ENCODE measurements at regions of chr5 and their contacts with region 1.

Region 1: DNA sequence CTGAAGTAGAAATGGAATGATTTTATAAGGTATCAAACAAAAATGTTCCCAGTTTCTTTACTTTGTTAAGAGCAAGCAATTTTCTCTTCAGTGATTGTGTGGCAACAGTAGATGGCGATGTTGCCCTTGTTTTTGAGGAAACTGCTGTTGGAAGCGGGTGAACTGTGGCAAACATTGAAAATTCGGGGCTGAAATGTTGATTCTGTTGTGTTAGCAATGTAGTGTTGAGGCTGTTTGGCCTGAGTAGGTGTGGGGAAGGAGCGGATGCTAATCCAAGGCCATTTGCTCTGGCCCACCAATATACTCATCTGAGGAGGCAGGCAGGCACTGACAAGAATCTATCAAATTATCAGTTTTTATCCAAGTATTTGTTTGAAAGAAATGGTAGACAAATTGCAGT is 129.8 kb downstream of the SLC12A2 start:
- DNase-seq: peak in 4 of 9 experiments; percentile 13 to 55 (median 34)
- ATAC-seq: no peak
- H3K4me3 ChIP-seq: no peak overlapping the region
- H3K4me3 Mint-ChIP-seq: no peak overlapping the region
- H3K27ac ChIP-seq: no peak overlapping the region
- H3K27ac Mint-ChIP-seq: no peak overlapping the region
- H3K4me1 ChIP-seq: no peaks in the 10 kb centered on the region
- H3K4me1 Mint-ChIP-seq: no peaks in the 10 kb centered on the region
- H3K27me3 ChIP-seq: no peaks in the 10 kb centered on the region
- H3K27me3 Mint-ChIP-seq: peaks cover 3% of the 10 kb centered on the region
- CTCF ChIP-seq: peak; percentile 58

Region 2: DNA sequence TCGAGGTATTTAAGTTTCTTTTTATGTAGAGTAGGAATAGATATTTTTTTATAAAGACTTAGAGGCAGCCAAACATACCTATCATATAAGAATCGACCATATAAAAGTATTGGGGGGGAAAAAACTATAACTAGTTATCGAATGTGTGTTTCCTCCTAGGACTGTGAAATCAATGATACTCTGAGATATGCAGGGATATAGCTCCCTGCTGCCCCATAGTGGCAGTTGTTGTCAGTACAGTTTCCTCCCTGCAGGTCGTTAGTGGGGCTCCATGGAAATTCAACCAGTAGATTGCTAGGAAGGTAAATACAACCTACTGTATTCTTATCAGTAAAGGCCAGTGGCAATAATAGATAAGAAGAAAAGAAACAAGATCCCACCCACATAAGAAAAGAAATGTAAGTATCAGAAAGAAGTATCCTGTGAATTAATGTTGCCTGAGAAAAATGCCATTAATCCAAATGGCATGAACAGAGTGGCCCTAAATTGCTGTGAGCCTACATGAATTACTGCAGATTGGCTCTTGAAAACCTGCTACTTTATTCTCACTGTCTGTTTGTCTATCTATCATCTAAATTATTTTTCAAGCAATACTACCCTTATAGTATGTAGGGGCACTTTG is 461.6 kb after region 1 on chr5:
- CTCF ChIA-PET with region 1: interaction called, 4 read pairs
- POLR2A ChIA-PET with region 1: no interaction called
- intact Hi-C with region 1: loop called in 1 of 2 experiments (anchors 5 kb)
- DNase-seq: peak in 3 of 9 experiments; percentile 7 to 28 (median 18)
- ATAC-seq: no peak
- H3K4me3 ChIP-seq: no peak overlapping the region
- H3K4me3 Mint-ChIP-seq: no peak overlapping the region
- H3K27ac ChIP-seq: no peak overlapping the region
- H3K27ac Mint-ChIP-seq: no peak overlapping the region
- H3K4me1 ChIP-seq: no peaks in the 10 kb centered on the region
- H3K4me1 Mint-ChIP-seq: no peaks in the 10 kb centered on the region
- H3K27me3 ChIP-seq: no peaks in the 10 kb centered on the region
- H3K27me3 Mint-ChIP-seq: no peaks in the 10 kb centered on the region
- CTCF ChIP-seq: peak; percentile 53

Region 3: DNA sequence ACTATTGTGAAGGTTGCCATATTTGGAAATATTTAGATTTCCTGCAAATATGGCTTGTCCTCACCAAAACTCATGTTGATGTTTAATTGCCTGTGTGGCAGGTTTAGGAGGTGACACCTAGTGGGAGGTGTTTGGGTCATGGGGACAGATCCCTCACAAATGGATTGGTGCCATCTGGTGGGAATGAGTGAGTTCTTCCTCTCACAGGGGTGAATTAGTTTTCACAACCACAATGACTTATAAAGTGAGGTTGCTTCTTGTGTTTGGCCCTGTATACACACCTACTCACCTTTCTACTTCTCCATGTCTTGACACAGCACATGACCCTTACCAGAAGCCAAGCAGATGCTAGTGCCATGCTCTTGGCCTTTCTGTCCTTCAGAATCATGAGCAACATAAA is 922.3 kb after region 1 on chr5:
- CTCF ChIA-PET with region 1: no interaction called
- POLR2A ChIA-PET with region 1: no interaction called
- intact Hi-C with region 1: loop called in 1 of 2 experiments (anchors 10 kb)
- DNase-seq: peak in 2 of 9 experiments; percentile 15 to 40
- ATAC-seq: no peak
- H3K4me3 ChIP-seq: no peak overlapping the region
- H3K4me3 Mint-ChIP-seq: no peak overlapping the region
- H3K27ac ChIP-seq: no peak overlapping the region
- H3K27ac Mint-ChIP-seq: no peak overlapping the region
- H3K4me1 ChIP-seq: no peaks in the 10 kb centered on the region
- H3K4me1 Mint-ChIP-seq: no peaks in the 10 kb centered on the region
- H3K27me3 ChIP-seq: no peaks in the 10 kb centered on the region
- H3K27me3 Mint-ChIP-seq: peaks cover 2% of the 10 kb centered on the region
- CTCF ChIP-seq: no peak

Region 4: GRCh38 chr5:129767906-129768380 is 1554.6 kb after region 1 on chr5:
- CTCF ChIA-PET with region 1: interaction called, 3 read pairs
- POLR2A ChIA-PET with region 1: no interaction called
- intact Hi-C with region 1: loop called (anchors 1 to 2 kb)
- DNase-seq: peak in 8 of 9 experiments; percentile 1 to 75 (median 42)
- ATAC-seq: peak; percentile 64
- H3K4me3 ChIP-seq: no peak overlapping the region
- H3K4me3 Mint-ChIP-seq: no peak overlapping the region
- H3K27ac ChIP-seq: no peak overlapping the region
- H3K27ac Mint-ChIP-seq: no peak overlapping the region
- H3K4me1 ChIP-seq: no peaks in the 10 kb centered on the region
- H3K4me1 Mint-ChIP-seq: peaks cover 2% of the 10 kb centered on the region
- H3K27me3 ChIP-seq: no peaks in the 10 kb centered on the region
- H3K27me3 Mint-ChIP-seq: peaks cover 6% of the 10 kb centered on the region
- CTCF ChIP-seq: peak; percentile 90

Region 5: DNA sequence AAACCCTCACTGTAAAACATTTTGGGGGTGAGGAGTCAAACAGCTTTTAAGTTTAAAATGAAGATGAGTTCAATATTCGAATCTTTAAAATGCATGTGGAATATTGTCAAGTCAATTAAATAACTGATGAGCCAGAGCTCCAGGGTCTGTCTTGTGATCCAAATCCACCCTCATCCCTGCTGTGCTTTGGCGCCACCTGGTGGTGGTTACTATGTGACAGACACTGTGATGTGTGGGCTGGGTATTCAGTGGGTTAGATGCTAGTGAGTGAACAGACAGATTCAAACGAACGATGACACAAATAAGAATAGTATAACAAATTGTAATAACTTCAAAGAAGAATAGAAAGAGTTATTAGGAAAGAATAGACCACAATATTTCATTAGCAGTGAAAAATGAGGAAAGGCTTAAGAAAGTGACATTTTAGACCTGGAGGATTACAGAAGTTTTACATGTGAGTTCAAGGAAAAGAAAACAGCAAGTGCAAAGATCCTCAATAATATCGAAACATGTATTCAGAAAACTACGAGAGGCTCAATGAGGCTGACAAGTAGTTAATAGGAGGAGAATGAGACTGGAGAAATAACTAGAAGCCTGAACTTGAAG is 1639.5 kb after region 1 on chr5:
- CTCF ChIA-PET with region 1: no interaction called
- POLR2A ChIA-PET with region 1: no interaction called
- intact Hi-C with region 1: loop called (anchors 2 to 5 kb)
- DNase-seq: peak; percentile 27 to 73 (median 61)
- ATAC-seq: peak; percentile 48
- H3K4me3 ChIP-seq: no peak overlapping the region
- H3K4me3 Mint-ChIP-seq: no peak overlapping the region
- H3K27ac ChIP-seq: no peak overlapping the region
- H3K27ac Mint-ChIP-seq: no peak overlapping the region
- H3K4me1 ChIP-seq: no peaks in the 10 kb centered on the region
- H3K4me1 Mint-ChIP-seq: no peaks in the 10 kb centered on the region
- H3K27me3 ChIP-seq: no peaks in the 10 kb centered on the region
- H3K27me3 Mint-ChIP-seq: peaks cover 8% of the 10 kb centered on the region
- CTCF ChIP-seq: peak; percentile 95

Measured in CD8-positive, alpha-beta T cell (primary cell).